Activated CD4-positive, alpha-beta T cell treated with anti-CD3 and anti-CD28 coated beads for 36 hours (primary cell): ENCODE measurements at regions of chr3 and their contacts with region 1.

Region 1: GRCh38 chr3:189841473-189842210 is 210.5 kb downstream of the TP63 start:
- DNase-seq: peak; percentile 13
- ATAC-seq: peak; percentile 89
- H3K4me3 Mint-ChIP-seq: no peak overlapping the region
- H3K27ac Mint-ChIP-seq: peak overlapping the region; percentile 82
- H3K4me1 Mint-ChIP-seq: peaks cover 27% of the 10 kb centered on the region
- H3K27me3 Mint-ChIP-seq: peaks cover 9% of the 10 kb centered on the region

Region 2: GRCh38 chr3:189588070-189588820 is 253.4 kb before region 1 on chr3:
- CTCF ChIA-PET with region 1: no interaction called
- POLR2A ChIA-PET with region 1: no interaction called
- intact Hi-C with region 1: loop called in 1 of 2 experiments (anchors 5 kb)
- DNase-seq: no peak
- ATAC-seq: no peak
- H3K4me3 Mint-ChIP-seq: no peak overlapping the region
- H3K27ac Mint-ChIP-seq: no peak overlapping the region
- H3K4me1 Mint-ChIP-seq: peaks cover 18% of the 10 kb centered on the region
- H3K27me3 Mint-ChIP-seq: no peaks in the 10 kb centered on the region

Region 3: DNA sequence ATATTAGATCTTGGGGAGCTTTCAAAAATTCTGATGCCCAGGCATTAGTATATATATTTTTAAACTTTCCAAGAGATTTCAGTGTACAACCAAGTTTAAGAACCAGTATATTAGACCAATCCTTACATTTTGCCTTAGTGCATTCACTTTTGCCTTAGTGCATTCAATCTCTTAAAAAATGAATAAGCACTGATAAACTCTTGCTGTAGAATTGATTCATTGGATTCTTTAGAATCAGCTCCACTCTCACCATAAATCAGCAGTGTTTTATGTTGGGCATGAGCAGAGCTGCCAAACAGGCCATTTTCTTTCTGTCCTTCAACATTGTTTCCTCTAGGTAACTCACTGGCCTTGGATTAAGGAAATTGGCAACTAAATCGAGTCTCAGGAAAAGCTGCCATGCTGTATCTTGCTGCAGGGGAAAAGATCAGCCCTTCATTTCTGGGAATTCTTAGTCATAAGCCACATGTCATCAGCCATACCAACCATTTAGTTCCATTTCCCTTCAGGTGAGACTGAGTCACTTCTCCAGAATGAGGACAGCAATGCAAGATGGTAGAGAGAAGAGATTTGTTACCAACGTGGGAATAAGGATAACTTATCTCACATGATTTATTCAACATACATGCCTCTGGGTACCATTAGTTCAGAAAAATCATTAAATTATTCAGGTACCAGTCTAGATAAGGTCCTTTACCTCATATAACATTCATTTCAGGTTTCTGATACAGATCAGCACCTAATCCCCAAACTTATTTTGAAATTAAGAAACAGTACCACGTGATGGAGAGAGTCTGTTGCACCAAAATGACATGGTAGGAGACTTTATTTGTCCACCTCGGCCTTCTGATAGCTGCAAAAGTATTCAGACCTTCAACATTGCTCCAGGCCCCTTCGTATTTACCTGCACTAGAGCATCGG is 86.6 kb after region 1 on chr3:
- CTCF ChIA-PET with region 1: interaction called, 5 read pairs
- POLR2A ChIA-PET with region 1: no interaction called
- intact Hi-C with region 1: loop called in 1 of 2 experiments (anchors 1 kb)
- DNase-seq: no peak
- ATAC-seq: peak; percentile 91
- H3K4me3 Mint-ChIP-seq: no peak overlapping the region
- H3K27ac Mint-ChIP-seq: peak overlapping the region; percentile 79
- H3K4me1 Mint-ChIP-seq: peaks cover 26% of the 10 kb centered on the region
- H3K27me3 Mint-ChIP-seq: peaks cover 2% of the 10 kb centered on the region

Region 4: DNA sequence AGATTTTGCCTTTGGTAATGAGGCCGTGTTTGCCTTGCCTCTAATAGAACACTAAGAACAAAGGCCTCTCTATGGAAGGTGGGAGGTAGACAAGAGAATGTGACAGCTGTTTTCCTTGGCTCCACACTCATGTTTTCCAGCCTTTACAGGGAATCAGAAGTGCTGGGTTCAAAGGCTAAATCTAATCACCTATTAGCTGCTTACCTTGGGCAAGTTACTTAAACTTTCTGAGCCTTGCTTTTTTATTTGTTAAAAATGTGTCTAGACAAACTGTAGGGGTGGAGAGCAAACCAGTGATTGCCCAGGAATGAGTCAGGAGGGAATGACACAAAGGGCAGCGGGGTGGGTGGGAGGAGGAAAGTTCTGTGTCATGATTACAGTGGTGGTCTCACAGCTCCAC is 100.0 kb after region 1 on chr3:
- CTCF ChIA-PET with region 1: interaction called, 3 read pairs
- POLR2A ChIA-PET with region 1: no interaction called
- intact Hi-C with region 1: loop called in 1 of 2 experiments (anchors 5 kb)
- DNase-seq: peak; percentile 30
- ATAC-seq: no peak
- H3K4me3 Mint-ChIP-seq: no peak overlapping the region
- H3K27ac Mint-ChIP-seq: no peak overlapping the region
- H3K4me1 Mint-ChIP-seq: peaks cover 13% of the 10 kb centered on the region
- H3K27me3 Mint-ChIP-seq: no peaks in the 10 kb centered on the region